ENCODE measurements at regions of chr3 and their contacts with region 1.

Region 1: DNA sequence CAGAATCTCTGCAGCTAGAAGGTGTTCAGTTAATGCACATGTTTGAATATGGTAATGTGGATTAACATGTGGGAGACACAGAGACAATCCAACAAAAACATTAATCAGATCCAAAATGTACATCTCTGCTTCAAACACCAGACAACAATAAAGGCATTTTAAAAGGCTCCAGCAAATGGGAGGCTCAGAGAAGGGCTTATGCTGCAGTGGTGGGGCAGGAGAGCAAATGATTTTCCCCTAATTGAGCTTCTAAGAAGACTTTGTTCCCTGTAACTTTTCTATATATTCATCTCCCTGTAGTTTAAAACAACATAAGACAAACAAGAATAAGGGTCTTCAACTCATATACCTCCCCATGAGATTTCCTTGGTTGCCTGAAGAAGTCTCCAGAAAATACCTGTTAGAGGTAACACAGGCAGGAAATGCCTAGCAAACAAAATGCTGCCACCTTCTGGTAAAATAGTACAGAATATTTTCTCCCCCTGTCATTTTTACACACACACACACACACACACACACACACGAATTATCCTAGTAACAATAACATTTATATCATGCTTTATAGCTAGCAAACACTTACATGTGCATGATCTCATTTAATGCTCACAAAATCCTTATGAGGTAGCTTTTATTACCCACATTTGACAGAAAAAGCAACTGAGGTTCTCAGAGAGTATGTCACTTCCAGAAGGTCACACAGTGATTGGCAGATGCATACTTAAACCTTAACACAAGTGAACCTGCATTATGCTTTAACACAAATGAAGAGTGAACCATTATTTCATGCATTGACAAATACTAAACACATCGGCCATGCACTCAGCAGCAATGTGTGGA is 123.4 kb upstream of the MB21D2 start:
- DNase-seq: peak; percentile 13
- H3K4me3 ChIP-seq: no peak overlapping the region
- H3K27ac ChIP-seq: no peak overlapping the region
- H3K27me3 ChIP-seq: peaks cover 4% of the 10 kb centered on the region
- CTCF ChIP-seq: peak; percentile 59

Region 2: DNA sequence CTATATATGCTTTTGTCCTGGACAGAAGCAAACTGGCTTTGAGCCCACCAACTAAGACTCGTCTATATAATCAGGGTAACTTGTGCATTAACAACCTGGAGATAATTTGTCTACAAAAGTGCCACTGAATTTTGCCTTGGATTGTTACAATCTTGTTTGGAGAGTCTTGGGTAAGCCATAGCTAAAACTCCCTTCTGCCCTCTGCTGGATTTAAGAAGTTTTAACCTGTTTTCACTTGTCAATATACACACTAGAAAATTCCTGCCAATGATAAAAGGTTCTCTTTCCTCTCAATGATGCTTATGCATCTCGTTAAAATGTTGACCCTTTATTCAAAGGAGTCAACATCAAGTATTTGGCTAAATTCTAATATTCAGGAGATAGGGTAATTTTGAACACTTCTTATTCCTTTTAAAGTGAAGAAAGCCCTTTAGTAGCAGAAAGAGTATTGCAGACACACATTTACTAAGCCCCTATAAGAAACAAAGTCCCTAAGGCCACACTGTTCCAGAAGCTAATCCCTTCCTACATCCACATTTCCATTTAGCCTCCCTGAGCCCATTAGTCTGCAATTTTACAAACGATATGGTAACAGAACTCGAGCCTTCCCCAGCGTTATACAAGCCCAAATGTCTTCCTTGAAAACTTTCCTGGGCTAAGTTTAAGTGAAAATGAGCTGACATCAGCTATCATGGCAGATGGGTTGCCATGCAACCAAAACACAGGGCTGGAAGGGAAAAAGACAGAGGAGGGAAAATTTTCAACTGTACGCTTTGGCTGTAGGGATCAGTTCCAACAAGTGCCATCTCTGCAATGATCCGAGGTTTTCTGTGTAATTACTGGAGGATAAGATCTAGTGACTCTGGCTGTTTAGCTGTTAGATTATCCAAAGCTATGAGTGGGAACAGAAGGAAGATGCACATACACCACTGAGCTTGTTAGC is 237.8 kb before region 1 on chr3:
- CTCF ChIA-PET with region 1: interaction called, 34 read pairs
- POLR2A ChIA-PET with region 1: no interaction called
- DNase-seq: peak; percentile 6
- H3K4me3 ChIP-seq: no peak overlapping the region
- H3K27ac ChIP-seq: no peak overlapping the region
- H3K27me3 ChIP-seq: no peaks in the 10 kb centered on the region
- CTCF ChIP-seq: peak; percentile 69

Region 3: DNA sequence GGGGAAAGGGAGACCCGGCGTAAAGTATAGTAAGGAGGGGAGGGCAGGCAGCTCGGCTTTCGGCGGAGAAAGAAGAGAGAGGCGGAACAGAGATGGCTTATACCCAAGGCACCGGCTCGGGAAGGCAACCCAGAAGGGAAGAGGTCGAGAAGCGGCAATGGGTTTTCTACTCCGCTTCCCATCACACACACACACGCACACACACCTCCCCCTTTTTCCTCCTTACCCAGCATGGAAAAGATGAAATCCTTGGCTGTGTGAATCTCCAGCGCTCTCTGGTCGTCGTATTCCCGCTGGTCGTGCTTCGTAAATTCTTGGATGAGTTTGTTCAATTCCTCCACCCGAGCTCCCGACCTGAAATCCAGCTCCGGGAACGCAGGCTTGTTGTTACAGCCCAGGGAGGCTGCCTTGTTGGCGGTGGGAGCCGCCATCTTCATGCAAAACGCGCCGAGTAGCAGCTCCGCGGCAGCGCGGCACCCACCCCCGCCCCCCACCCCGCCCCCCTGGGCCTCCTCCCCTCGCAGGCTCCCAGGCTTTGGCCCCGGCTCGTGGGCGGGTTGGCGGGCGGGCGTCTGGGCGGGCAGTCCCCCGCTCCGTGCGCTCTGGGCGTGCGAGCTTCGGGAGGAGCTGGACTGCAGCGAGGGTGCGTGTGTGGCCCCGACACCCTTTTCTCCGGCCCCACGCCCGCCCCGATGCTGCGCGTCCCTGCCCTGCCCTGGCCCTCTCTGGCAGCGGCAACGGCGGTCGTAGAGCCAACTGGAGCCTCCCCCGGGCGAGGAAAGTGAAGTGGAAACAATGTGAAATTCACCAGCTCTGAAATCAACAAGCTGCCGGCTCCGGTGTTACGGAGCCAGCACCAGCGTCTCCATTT is 123.4 kb before region 1 on chr3 and contains the start of gene MB21D2:
- CTCF ChIA-PET with region 1: interaction called, 20 read pairs
- POLR2A ChIA-PET with region 1: interaction called, 4 read pairs
- DNase-seq: peak; percentile 37
- H3K4me3 ChIP-seq: peak within 1 kb of the TSS; percentile 91
- H3K27ac ChIP-seq: peak within 1 kb of the TSS; percentile 96
- H3K27me3 ChIP-seq: no peaks in the 10 kb centered on the region
- CTCF ChIP-seq: no peak
- polyA plus RNA-seq, gene MB21D2: 14.1 and 14.6 TPM in 2 replicates

Region 4: GRCh38 chr3:193016437-193016901 is 24.6 kb before region 1 on chr3:
- CTCF ChIA-PET with region 1: interaction called, 10 read pairs
- POLR2A ChIA-PET with region 1: no interaction called
- DNase-seq: no peak
- H3K4me3 ChIP-seq: no peak overlapping the region
- H3K27ac ChIP-seq: no peak overlapping the region
- H3K27me3 ChIP-seq: no peaks in the 10 kb centered on the region
- CTCF ChIP-seq: no peak

Region 5: GRCh38 chr3:193030276-193030675 is 10.8 kb before region 1 on chr3:
- CTCF ChIA-PET with region 1: interaction called, 21 read pairs
- POLR2A ChIA-PET with region 1: no interaction called
- DNase-seq: no peak
- H3K4me3 ChIP-seq: no peak overlapping the region
- H3K27ac ChIP-seq: no peak overlapping the region
- H3K27me3 ChIP-seq: peaks cover 5% of the 10 kb centered on the region
- CTCF ChIP-seq: no peak